ENCODE measurements at regions of chr1 and their contacts with region 1.

Region 1: GRCh38 chr1:85502625-85503083 is 37.7 kb upstream of the DDAH1 start:
- DNase-seq: no peak
- ATAC-seq: peak; percentile 95

Region 2: DNA sequence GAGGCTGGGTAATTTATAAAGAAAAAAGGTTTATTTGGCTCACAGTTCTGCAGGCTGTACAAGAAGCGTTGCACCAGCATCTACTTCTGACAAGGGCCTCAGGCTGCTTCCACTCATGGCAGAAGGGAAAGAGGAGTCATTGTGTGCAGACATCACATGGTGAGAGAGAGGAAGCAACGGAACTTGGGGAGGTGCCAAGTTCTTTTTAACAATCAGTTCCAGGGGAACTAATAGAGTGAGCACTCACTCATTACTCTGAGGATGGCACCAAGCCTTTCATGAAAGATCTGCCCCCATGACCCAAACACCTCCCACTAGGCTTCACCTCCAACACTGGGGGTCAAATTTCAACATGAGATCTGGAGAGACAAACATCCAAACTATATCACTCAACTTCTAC is 114.9 kb before region 1 on chr1:
- intact Hi-C with region 1: no loop called
- DNase-seq: no peak
- ATAC-seq: no peak

Region 3: GRCh38 chr1:85464497-85465098 is 38.1 kb before region 1 on chr1:
- intact Hi-C with region 1: loop called (anchors 5 kb)
- DNase-seq: peak; percentile 71
- ATAC-seq: peak; percentile 84

Region 4: DNA sequence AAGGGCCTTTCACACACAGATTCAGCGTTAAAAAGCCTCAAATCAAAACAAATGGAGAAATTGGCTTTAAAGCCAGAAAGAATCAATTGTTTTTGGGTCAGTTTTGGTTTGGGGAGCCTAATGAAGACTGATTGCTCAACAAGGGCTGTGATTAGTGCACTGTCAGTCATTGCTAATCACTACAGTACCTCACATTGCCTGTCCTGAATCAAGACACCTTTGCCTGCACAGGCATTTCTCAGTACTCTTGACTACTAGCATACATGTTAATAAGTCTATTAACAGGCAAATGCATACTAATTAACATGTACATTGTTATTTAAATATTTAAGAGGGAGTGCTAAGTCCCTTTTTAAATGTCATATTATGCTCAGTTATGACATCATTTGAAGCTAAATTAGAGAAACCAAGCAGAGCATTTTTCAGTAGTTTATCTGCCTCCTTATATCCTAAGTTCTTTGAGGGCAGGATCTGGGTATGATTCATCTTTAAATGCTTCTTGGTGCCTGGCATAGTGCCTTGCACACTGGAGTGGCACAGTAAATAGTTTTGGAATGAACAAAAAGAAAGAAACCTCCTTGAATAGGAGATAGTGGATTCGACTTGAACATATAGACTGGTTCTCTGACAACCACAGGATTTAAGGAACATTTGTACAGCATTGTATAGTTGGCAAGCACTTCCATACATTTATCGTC is 52.1 kb after region 1 on chr1:
- intact Hi-C with region 1: no loop called
- DNase-seq: no peak
- ATAC-seq: no peak

Region 5: DNA sequence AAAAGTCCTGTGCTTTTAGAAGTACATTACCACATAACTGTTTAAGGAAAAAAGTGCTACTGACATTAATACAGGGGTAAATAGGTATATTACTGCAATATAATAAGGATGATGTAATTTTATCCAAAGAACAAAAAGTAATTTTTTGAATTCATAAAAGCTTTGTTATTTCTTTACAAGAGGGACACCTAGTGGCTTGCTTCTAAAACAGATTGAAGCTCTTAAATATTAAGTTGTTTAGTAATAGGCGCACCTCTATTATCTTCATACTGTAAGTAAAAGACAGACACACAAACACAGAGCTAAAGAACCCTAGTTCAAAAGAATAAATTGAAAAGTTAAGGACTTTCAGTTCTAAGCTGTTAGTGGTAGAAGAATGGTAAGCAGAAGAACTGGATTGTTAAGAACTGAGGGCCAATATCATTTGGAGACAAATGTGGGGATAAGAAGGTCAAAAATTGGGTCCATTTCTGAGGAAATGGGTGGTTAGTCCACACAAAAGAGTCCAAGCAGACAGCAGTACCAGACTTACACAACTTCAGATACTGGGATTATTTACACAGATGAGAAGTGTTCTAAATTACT is 190.2 kb after region 1 on chr1:
- intact Hi-C with region 1: loop called (anchors 10 kb)
- DNase-seq: no peak
- ATAC-seq: peak; percentile 64